Transverse colon (tissue), 4 donors: ENCODE measurements at regions of chr10 and their contacts with region 1.

Region 1: GRCh38 chr10:72893136-72893798 is at the start of gene OIT3:
- DNase-seq: no peak
- H3K4me3 ChIP-seq: no peak within 1 kb of the TSS
- H3K27ac ChIP-seq: no peak within 1 kb of the TSS
- H3K4me1 ChIP-seq: no peaks in the 10 kb centered on the region
- H3K27me3 ChIP-seq: no peaks in the 10 kb centered on the region
- CTCF ChIP-seq: no peak
- EP300 ChIP-seq: no peak
- POLR2A ChIP-seq: no peak
- total RNA-seq, gene OIT3: 0.16 to 1.2 (median 0.27) TPM in 3 of 4 donors, not detected in the other

Region 2: DNA sequence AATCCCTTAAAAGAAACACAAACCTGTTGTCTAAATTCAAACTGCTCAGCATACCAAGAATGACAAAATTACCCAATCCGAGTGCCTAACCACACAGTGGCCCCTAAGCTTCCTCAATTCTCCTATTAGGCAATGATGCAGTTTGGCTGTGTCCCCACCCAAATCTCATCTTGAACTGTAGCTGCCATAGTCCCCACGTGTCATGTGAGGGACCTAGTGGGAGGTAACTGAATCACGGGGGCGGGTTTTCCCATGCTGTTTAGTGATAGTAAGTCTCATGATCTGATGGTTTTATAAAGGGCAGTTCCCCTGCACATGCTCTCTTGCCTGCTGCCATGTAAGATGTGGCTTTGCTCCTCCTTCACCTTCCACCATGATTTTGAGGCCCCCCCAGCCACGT is 1064.1 kb before region 1 on chr10:
- in situ Hi-C with region 1: no loop called
- intact Hi-C with region 1: loop called (anchors 5 kb)
- DNase-seq: no peak
- H3K4me3 ChIP-seq: no peak overlapping the region
- H3K27ac ChIP-seq: no peak overlapping the region
- H3K4me1 ChIP-seq: peaks cover 0 to 12% (median 0%) of the 10 kb centered on the region in 4 donors
- H3K27me3 ChIP-seq: no peaks in the 10 kb centered on the region
- CTCF ChIP-seq: no peak
- EP300 ChIP-seq: no peak
- POLR2A ChIP-seq: no peak

Region 3: GRCh38 chr10:73495884-73496674 is 602.8 kb after region 1 on chr10 and contains the start of gene PPP3CB:
- in situ Hi-C with region 1: no loop called
- intact Hi-C with region 1: no loop called
- DNase-seq: peak; percentile 91
- H3K4me3 ChIP-seq: peak within 1 kb of the TSS; percentile 59 to 88 (median 62)
- H3K27ac ChIP-seq: peak within 1 kb of the TSS; percentile 97 to 98 (median 98)
- H3K4me1 ChIP-seq: peaks cover 17 to 38% (median 30%) of the 10 kb centered on the region in 4 donors
- H3K27me3 ChIP-seq: no peaks in the 10 kb centered on the region
- CTCF ChIP-seq: no peak
- EP300 ChIP-seq: no peak
- POLR2A ChIP-seq: no peak
- total RNA-seq, gene PPP3CB: 20.5 to 54.5 (median 35.9) TPM